Tibial artery (tissue), 4 donors: ENCODE measurements at regions of chr15 and their contacts with region 1.

Region 1: GRCh38 chr15:34252545-34252944 is 27.7 kb downstream of the EMC4 start:
- DNase-seq: no peak
- H3K4me3 ChIP-seq: no peak overlapping the region
- H3K27ac ChIP-seq: no peak overlapping the region
- H3K4me1 ChIP-seq: no peaks in the 10 kb centered on the region
- H3K27me3 ChIP-seq: no peaks in the 10 kb centered on the region
- CTCF ChIP-seq: no peak

Region 2: GRCh38 chr15:34297059-34297458 is 44.5 kb after region 1 on chr15:
- intact Hi-C with region 1: no loop called
- DNase-seq: no peak
- H3K4me3 ChIP-seq: no peak overlapping the region
- H3K27ac ChIP-seq: peak overlapping the region; percentile 44 to 56
- H3K4me1 ChIP-seq: peaks cover 0 to 28% (median 11%) of the 10 kb centered on the region in 4 donors
- H3K27me3 ChIP-seq: no peaks in the 10 kb centered on the region
- CTCF ChIP-seq: no peak

Region 3: DNA sequence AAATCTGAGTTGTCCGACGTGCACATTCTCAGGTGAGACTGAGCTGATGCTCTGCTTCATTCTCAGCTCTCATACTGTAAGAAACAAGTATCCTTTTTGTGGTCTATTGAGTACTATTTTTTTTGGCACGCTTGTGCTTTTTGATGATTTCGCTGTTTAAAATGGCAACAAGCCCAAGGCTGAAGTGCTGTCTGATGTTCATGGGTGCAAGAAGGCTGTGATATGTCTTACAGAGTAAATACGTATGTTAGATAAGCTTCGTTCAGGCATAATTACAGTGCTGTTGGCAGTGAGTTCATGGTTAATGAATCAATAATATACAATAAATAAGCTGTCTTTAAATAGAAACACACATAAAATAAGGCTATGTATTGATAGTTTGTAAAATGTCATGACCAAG is 689.8 kb after region 1 on chr15:
- intact Hi-C with region 1: loop called (anchors 5 kb)
- DNase-seq: no peak
- H3K4me3 ChIP-seq: no peak overlapping the region
- H3K27ac ChIP-seq: no peak overlapping the region
- H3K4me1 ChIP-seq: no peaks in the 10 kb centered on the region
- H3K27me3 ChIP-seq: no peaks in the 10 kb centered on the region
- CTCF ChIP-seq: no peak